CD4-positive, alpha-beta T cell (primary cell): ENCODE measurements at regions of chr6 and their contacts with region 1.

Region 1: GRCh38 chr6:90263633-90264032 is 33.0 kb downstream of the BACH2 start:
- DNase-seq: peak in 1 of 14 experiments; percentile 46
- ATAC-seq: no peak
- H3K4me3 ChIP-seq: no peak overlapping the region
- H3K4me3 Mint-ChIP-seq: peak overlapping the region; percentile 40
- H3K27ac ChIP-seq: no peak overlapping the region
- H3K27ac Mint-ChIP-seq: peak overlapping the region; percentile 96
- H3K4me1 ChIP-seq: peaks cover 19% of the 10 kb centered on the region
- H3K4me1 Mint-ChIP-seq: peaks cover 97% of the 10 kb centered on the region
- H3K27me3 ChIP-seq: no peaks in the 10 kb centered on the region
- H3K27me3 Mint-ChIP-seq: no peaks in the 10 kb centered on the region
- CTCF ChIP-seq: no peak

Region 2: DNA sequence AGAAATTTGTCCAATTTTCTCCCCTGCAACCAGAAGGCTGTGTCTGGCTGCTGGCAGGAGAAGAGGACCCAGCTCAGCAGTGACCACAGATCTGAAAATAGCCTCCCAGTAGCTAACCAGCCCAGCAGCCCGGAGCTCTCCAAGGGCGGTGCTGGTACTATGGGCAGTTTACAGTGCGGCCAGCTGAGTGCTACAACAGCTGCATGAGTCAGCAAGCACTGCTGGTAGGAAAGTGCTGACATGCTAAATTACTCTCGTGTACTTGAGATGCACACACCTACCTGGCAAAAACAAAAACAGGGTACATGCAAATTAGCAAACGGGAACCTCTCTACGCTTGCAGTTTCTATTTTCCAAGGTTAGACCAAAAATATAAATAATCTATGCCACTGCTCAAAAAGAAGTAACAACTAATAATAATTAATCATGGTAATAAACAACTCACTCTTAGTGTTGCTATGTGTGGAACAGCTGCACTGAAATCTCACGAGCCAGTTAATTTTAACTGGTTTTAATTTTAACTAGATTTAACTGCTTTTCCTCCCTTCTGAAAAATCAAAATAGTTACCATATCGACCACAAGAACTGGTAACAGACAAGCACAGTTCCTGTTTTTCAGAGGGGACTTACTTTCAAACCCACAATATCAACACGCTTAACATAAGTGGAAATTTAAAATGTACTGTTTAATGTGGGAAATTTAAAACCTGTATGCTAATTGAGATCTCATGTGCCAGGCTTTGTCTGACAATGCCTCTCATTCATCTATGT is 22.2 kb after region 1 on chr6:
- CTCF ChIA-PET with region 1: no interaction called
- POLR2A ChIA-PET with region 1: interaction called, 15 read pairs
- intact Hi-C with region 1: loop called in 1 of 2 experiments (anchors 2 kb)
- DNase-seq: peak in 11 of 14 experiments; percentile 21 to 79 (median 45)
- ATAC-seq: peak; percentile 47
- H3K4me3 ChIP-seq: peak overlapping the region; percentile 54
- H3K4me3 Mint-ChIP-seq: peak overlapping the region; percentile 83
- H3K27ac ChIP-seq: peak overlapping the region; percentile 12 to 80
- H3K27ac Mint-ChIP-seq: peak overlapping the region; percentile 91
- H3K4me1 ChIP-seq: peaks cover 38% of the 10 kb centered on the region
- H3K4me1 Mint-ChIP-seq: peaks cover 93% of the 10 kb centered on the region
- H3K27me3 ChIP-seq: no peaks in the 10 kb centered on the region
- H3K27me3 Mint-ChIP-seq: no peaks in the 10 kb centered on the region
- CTCF ChIP-seq: no peak

Region 3: DNA sequence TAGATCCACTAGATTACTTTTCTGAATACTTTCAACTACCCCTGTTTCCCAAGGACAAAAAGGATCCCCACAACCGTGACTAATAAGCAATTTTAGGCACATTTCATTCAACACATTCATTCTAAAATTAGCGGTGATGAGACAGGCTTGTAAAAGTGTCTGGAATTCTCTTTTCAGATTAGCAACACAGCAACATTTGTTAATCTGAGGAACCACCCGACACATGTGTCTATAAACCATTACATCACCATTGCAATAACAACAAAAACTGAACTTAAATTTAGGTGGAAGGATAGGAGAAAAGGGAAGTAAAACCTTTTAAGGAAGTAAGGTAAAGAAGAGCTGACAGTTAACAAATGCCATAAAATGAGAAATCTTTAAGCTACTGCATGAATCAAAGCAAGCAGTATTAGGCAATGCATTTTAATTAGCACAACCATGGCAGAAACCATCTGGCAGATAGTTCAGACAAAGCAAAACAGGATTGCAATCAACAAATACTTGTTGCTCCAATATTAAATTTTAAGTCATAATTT is 274.2 kb after region 1 on chr6:
- CTCF ChIA-PET with region 1: no interaction called
- POLR2A ChIA-PET with region 1: no interaction called
- intact Hi-C with region 1: no loop called
- DNase-seq: peak in 3 of 14 experiments; percentile 11 to 56 (median 40)
- ATAC-seq: no peak
- H3K4me3 ChIP-seq: no peak overlapping the region
- H3K4me3 Mint-ChIP-seq: no peak overlapping the region
- H3K27ac ChIP-seq: no peak overlapping the region
- H3K27ac Mint-ChIP-seq: no peak overlapping the region
- H3K4me1 ChIP-seq: no peaks in the 10 kb centered on the region
- H3K4me1 Mint-ChIP-seq: no peaks in the 10 kb centered on the region
- H3K27me3 ChIP-seq: no peaks in the 10 kb centered on the region
- H3K27me3 Mint-ChIP-seq: no peaks in the 10 kb centered on the region
- CTCF ChIP-seq: no peak